ENCODE measurements at regions of chr12 and their contacts with region 1.

Region 1: DNA sequence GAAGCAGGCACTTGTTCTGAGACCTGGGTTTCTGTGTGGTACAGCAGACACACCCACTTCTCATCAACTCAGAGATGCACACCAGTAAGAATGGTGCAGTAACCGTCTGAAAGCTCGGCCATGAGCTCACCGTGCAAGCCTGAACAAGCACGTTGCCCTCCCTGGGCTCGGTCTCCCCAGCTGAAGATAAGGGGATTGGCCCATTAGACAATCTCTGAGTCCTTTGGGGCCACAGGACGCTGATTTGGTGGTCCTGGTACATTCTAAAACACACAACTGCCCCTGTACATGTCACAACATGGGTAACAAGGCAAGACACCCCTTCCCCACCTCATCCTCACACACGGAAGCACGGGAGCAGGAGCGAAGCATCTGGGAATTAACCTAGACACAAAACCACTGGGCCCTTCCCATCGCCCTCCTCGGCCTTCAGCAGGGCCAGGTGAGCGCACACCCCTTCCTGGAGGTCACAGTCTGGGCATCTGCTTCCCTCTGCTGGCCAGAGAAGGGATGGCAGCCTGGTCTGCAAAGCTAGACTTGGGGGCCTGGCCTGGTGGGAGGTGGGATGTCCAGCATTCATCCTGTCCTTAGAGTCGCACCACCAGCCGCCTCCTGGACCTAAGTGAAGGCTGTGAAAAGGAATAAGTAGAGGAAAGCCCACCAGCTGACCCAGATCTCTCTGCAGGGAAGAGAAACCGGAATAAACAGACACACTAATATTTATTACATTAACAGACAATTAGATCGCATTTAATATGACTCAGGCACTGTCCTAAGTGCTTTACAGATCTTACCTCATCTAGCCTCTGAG is 18.9 kb upstream of the SMUG1 start:
- DNase-seq: peak; percentile 56 to 82 (median 66)
- H3K4me3 ChIP-seq: no peak overlapping the region
- H3K4me3 Mint-ChIP-seq: no peak overlapping the region
- H3K27ac ChIP-seq: no peak overlapping the region
- H3K27ac Mint-ChIP-seq: peak overlapping the region in 1 of 8 donors; percentile 39
- H3K4me1 ChIP-seq: no peaks in the 10 kb centered on the region
- H3K4me1 Mint-ChIP-seq: peaks cover 0 to 7% (median 6%) of the 10 kb centered on the region in 3 donors
- H3K27me3 ChIP-seq: no peaks in the 10 kb centered on the region
- H3K27me3 Mint-ChIP-seq: peaks cover 28 to 60% of the 10 kb centered on the region in 2 donors

Region 2: DNA sequence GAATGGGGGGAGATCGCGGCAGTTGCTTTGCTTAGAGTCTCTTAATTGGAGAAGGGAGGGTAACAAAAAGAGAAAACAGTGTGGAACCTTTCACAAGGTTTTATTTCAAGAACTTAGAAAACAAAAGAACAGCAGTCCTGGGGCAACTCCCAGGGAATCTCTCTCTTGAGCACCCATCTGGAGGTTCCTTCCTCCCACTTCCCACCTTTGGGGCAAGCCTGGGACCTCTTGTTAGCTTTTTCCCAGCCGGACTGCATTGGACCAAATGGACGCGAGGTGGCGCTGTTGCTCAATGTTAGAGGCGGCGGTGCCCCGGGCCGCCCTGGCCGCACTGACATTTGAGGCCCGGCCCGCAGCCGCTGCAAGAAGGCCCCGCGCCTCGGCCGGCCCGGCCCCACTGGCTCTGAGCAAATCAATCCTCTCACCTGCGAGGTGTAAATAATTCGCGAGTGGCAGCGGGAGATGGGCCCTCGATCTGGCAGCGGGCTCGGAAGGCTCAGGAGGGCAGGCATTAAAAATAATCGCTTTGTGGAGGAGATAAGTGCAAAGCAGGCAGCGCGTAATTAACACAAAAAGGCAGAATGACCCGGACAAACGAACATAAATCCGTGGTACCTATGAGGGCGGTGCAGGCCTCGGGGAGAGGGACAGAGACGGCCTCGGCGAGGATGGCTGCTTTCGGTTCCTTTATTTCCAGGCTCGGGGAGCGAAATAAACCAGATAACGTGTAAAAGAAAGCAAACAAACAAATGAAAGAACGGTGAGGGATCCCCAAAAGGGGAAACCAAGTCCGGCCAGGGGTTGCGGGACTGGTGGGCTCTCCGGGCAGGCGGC is 201.6 kb before region 1 on chr12:
- CTCF ChIA-PET with region 1: interaction called, 216 read pairs
- POLR2A ChIA-PET with region 1: no interaction called
- DNase-seq: peak; percentile 75 to 87 (median 82)
- H3K4me3 ChIP-seq: peak overlapping the region; percentile 51
- H3K4me3 Mint-ChIP-seq: peak overlapping the region; percentile 66 to 93 (median 77)
- H3K27ac ChIP-seq: no peak overlapping the region
- H3K27ac Mint-ChIP-seq: peak overlapping the region in 5 of 8 donors; percentile 14 to 73 (median 68)
- H3K4me1 ChIP-seq: peaks cover 19% of the 10 kb centered on the region
- H3K4me1 Mint-ChIP-seq: peaks cover 20 to 46% (median 20%) of the 10 kb centered on the region in 3 donors
- H3K27me3 ChIP-seq: peaks cover 83% of the 10 kb centered on the region
- H3K27me3 Mint-ChIP-seq: peaks cover 78 to 99% of the 10 kb centered on the region in 2 donors

Region 3: DNA sequence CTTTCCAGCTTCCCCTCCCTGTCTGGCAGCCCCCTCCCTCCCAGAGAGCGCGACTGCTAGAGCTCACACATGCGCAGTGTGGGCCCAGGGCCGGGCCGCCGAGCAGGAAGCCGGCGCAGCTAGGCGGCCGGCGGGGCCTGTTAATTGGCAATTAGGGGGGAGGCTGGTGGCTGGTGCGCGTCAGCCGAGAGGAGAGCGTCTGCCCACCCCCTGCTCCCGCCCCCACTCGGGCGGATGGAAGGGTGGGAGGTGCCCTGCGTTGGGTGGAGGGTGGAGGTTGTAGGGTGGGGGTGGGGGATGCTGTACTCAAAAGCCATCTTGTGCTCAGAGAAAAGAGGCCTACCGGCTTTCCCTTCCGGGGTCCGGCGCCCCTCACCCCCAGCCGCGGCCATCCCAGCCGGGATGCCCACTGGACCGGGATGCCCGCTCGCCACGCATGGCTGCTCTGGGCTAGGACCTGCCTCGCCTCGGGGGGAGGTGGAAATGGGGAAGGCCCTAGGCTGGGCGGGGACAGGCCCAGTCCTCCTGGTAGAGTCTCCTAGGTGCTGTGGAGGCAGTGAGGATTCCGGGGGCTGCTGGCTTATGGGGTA is 189.7 kb before region 1 on chr12:
- CTCF ChIA-PET with region 1: interaction called, 14 read pairs
- POLR2A ChIA-PET with region 1: no interaction called
- DNase-seq: peak; percentile 62 to 88 (median 73)
- H3K4me3 ChIP-seq: peak overlapping the region; percentile 86
- H3K4me3 Mint-ChIP-seq: peak overlapping the region; percentile 86 to 95 (median 91)
- H3K27ac ChIP-seq: peak overlapping the region; percentile 72
- H3K27ac Mint-ChIP-seq: peak overlapping the region in 7 of 8 donors; percentile 26 to 96 (median 70)
- H3K4me1 ChIP-seq: peaks cover 11% of the 10 kb centered on the region
- H3K4me1 Mint-ChIP-seq: peaks cover 15 to 34% (median 18%) of the 10 kb centered on the region in 3 donors
- H3K27me3 ChIP-seq: peaks cover 60% of the 10 kb centered on the region
- H3K27me3 Mint-ChIP-seq: peaks cover 63 to 76% of the 10 kb centered on the region in 2 donors

Region 4: DNA sequence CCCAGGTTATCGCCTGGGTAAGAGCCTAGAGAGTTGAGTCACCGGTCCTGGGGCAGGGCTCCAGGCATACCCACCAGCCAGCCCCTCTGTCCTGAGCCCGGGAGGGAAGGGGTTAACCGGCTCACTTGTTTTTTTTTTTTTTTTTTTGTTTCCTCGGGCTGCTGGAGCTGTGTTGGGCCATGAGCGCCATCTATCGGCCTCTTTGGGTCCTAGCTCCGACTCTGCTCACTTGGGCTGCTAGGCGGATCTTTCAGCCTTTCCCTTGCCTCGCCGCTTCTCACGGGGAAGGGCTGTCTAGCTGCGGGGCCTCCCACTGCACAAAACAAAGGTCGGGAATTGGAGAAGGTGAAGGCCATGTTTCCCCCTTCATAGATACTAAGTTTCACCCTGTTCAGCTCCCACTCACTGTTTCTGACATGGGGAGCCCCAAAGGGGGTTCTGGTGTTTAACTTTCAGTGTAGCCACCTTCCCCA is 16.1 kb before region 1 on chr12:
- CTCF ChIA-PET with region 1: interaction called, 122 read pairs
- POLR2A ChIA-PET with region 1: no interaction called
- DNase-seq: peak; percentile 66 to 83 (median 74)
- H3K4me3 ChIP-seq: no peak overlapping the region
- H3K4me3 Mint-ChIP-seq: peak overlapping the region in 1 of 7 donors; percentile 72
- H3K27ac ChIP-seq: no peak overlapping the region
- H3K27ac Mint-ChIP-seq: peak overlapping the region in 2 of 8 donors; percentile 29 to 78
- H3K4me1 ChIP-seq: peaks cover 17% of the 10 kb centered on the region
- H3K4me1 Mint-ChIP-seq: peaks cover 23 to 34% (median 31%) of the 10 kb centered on the region in 3 donors
- H3K27me3 ChIP-seq: peaks cover 20% of the 10 kb centered on the region
- H3K27me3 Mint-ChIP-seq: peaks cover 36 to 50% of the 10 kb centered on the region in 2 donors

Region 5: DNA sequence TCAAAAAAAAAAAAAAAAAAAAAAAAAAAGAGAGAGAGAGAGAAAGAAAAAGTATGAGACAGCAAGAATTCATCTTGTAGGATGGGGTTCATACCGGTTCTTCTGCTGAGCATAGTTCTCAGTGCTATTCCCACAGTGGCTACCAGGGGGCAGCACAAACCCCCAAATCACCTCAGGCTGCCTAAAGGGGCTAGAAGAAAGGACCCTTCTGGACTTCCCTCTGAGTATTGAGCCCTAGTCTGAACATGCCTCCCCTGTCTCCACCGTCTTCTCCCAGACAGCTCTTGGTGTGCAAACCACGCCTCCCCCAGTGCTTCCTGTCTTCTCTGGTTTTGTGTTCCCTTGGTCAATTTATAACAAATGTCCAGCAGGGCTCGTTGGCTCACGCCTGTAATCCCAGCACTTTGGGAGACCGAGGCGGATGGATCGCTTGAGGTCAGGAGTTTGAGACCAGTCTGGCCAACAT is 12.4 kb after region 1 on chr12:
- CTCF ChIA-PET with region 1: interaction called, 13 read pairs
- POLR2A ChIA-PET with region 1: no interaction called
- DNase-seq: peak; percentile 47 to 67 (median 55)
- H3K4me3 ChIP-seq: no peak overlapping the region
- H3K4me3 Mint-ChIP-seq: no peak overlapping the region
- H3K27ac ChIP-seq: no peak overlapping the region
- H3K27ac Mint-ChIP-seq: no peak overlapping the region
- H3K4me1 ChIP-seq: peaks cover 24% of the 10 kb centered on the region
- H3K4me1 Mint-ChIP-seq: peaks cover 22 to 26% (median 22%) of the 10 kb centered on the region in 3 donors
- H3K27me3 ChIP-seq: no peaks in the 10 kb centered on the region
- H3K27me3 Mint-ChIP-seq: peaks cover 4 to 19% of the 10 kb centered on the region in 2 donors

Region 6: DNA sequence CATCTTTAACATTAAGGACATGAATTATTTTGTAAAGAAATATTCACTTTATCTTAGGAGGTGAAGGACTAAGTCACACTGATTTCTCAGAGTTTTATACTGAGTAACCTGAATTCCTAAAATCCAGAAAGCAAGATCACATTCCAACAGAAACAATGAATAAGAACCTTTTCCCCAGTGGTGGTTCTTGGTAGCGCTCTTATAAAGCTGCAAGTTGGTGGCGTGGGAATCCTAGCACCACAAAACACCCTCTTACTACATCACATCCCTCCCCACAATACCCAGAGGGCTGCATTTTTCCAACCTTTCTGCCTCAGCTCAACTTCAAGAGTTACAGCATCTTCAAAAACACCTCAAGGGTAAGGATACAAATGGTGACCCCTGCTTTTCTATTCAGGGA is 25.1 kb after region 1 on chr12:
- CTCF ChIA-PET with region 1: no interaction called
- POLR2A ChIA-PET with region 1: no interaction called
- DNase-seq: no peak
- H3K4me3 ChIP-seq: no peak overlapping the region
- H3K4me3 Mint-ChIP-seq: no peak overlapping the region
- H3K27ac ChIP-seq: no peak overlapping the region
- H3K27ac Mint-ChIP-seq: no peak overlapping the region
- H3K4me1 ChIP-seq: no peaks in the 10 kb centered on the region
- H3K4me1 Mint-ChIP-seq: peaks cover 0 to 6% (median 4%) of the 10 kb centered on the region in 3 donors
- H3K27me3 ChIP-seq: no peaks in the 10 kb centered on the region
- H3K27me3 Mint-ChIP-seq: no peaks in the 10 kb centered on the region

Region 7: DNA sequence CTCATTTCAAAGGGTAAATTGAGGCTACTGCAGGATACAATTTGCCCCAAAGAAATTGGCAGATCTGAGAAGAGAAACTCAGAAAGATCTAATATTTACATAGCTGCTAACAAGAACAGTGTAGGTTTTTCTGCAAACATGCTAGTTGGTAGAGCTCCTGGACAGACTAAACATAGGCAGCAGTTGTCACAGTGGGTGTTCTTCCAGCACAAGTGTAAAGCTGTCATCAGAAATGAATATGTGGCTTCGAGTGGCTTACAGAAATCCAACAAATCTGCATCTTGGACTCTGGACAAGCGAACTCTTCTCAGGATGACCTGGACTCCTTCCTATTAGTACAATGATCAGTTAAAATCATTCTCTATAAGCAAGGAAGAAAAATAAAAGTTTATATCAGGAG is 66.3 kb after region 1 on chr12:
- CTCF ChIA-PET with region 1: no interaction called
- POLR2A ChIA-PET with region 1: no interaction called
- DNase-seq: no peak
- H3K4me3 ChIP-seq: no peak overlapping the region
- H3K4me3 Mint-ChIP-seq: no peak overlapping the region
- H3K27ac ChIP-seq: no peak overlapping the region
- H3K27ac Mint-ChIP-seq: peak overlapping the region in 2 of 8 donors; percentile 14 to 45
- H3K4me1 ChIP-seq: peaks cover 20% of the 10 kb centered on the region
- H3K4me1 Mint-ChIP-seq: peaks cover 14 to 40% (median 37%) of the 10 kb centered on the region in 3 donors
- H3K27me3 ChIP-seq: no peaks in the 10 kb centered on the region
- H3K27me3 Mint-ChIP-seq: no peaks in the 10 kb centered on the region

Measured in CD8-positive, alpha-beta memory T cell (primary cell).